Common myeloid progenitor, CD34-positive (primary cell): ENCODE measurements at regions of chr1 and their contacts with region 1.

Region 1: GRCh38 chr1:941588-942383 is 17.3 kb downstream of the NOC2L start:
- DNase-seq: peak in 2 of 3 donors; percentile 51 to 64
- H3K4me3 ChIP-seq: peak overlapping the region in 5 of 7 experiments; percentile 13 to 61 (median 26)
- H3K27ac ChIP-seq: no peak overlapping the region
- H3K4me1 ChIP-seq: peaks cover 0 to 40% (median 33%) of the 10 kb centered on the region in 4 experiments
- H3K27me3 ChIP-seq: peaks cover 0 to 67% (median 18%) of the 10 kb centered on the region in 5 experiments

Region 2: GRCh38 chr1:904310-904950 is 37.4 kb before region 1 on chr1:
- CTCF ChIA-PET with region 1: interaction called, 47 read pairs
- POLR2A ChIA-PET with region 1: no interaction called
- DNase-seq: peak; percentile 72 to 87 (median 87)
- H3K4me3 ChIP-seq: peak overlapping the region in 2 of 7 experiments; percentile 23 to 40
- H3K27ac ChIP-seq: no peak overlapping the region
- H3K4me1 ChIP-seq: peaks cover 5 to 36% (median 25%) of the 10 kb centered on the region in 4 experiments
- H3K27me3 ChIP-seq: peaks cover 0 to 50% (median 10%) of the 10 kb centered on the region in 5 experiments

Region 3: DNA sequence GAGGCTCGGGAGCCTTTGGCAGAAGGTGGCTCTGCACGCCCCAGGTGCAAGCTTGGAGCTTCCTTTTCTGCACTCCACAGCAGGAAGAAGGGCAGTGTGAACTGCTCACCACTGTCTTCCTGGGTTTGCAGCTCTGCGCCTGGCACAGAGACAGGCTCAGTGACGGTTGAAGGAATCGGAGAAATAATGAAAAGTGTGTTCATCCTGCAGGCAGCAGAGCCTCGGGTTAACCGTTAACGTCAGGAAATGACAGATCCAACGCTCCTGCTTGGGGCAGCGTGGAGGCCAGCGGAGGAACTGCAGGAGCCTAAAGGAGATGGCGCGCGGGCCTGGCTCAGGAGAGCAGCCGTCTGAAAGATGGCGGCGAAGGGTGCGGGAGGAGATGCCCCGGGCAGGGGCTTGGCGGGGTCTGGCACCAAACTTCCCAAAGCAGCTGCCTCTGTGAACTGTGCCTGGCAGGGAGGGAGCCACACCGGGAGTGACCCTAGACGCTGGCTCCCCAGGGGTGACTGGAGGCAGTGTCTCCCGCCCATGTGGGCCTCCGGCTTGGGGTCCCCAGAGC is 29.0 kb before region 1 on chr1:
- CTCF ChIA-PET with region 1: interaction called, 11 read pairs
- POLR2A ChIA-PET with region 1: no interaction called
- DNase-seq: peak in 2 of 3 donors; percentile 58 to 64
- H3K4me3 ChIP-seq: peak overlapping the region in 3 of 7 experiments; percentile 0 to 24 (median 20)
- H3K27ac ChIP-seq: no peak overlapping the region
- H3K4me1 ChIP-seq: peaks cover 0 to 73% (median 53%) of the 10 kb centered on the region in 4 experiments
- H3K27me3 ChIP-seq: peaks cover 0 to 2% (median 0%) of the 10 kb centered on the region in 5 experiments

Region 4: DNA sequence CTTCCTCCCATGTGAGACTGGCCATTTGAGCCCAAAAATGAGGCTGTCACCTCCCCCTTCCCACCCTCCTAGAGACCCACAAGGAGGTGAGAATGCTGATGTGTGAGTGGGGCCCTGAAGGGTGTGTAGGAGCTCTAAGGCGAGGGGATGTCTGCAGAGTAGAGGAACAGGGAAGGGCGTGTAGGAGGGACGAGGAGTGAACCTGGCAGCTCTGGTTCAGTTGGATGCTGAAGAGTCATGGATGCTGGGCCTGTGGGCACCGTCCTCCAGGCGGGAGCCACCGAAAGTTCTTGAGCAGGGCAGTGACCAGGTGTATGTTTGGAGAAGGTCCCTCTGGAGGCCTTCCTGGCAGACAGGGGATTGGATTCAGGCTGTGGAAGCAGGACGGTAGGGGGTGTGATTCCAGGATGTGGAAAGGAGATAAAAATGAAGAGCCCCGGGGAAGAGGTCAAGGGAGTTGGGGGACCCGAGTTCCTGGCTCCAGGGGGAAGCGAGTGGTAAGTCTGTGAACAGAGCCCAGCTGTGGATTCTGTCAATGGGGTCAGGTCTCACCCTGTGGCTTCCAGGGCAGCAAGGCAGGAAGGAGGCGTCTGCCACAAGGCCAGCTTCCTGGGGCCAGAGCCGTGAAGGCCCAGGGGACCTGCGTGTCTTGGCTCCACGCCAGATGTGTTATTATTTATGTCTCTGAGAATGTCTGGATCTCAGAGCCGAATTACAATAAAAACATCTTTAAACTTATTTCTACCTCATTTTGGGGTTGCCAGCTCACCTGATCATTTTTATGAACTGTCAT is 10.2 kb before region 1 on chr1:
- CTCF ChIA-PET with region 1: interaction called, 22 read pairs
- POLR2A ChIA-PET with region 1: no interaction called
- DNase-seq: no peak
- H3K4me3 ChIP-seq: no peak overlapping the region
- H3K27ac ChIP-seq: no peak overlapping the region
- H3K4me1 ChIP-seq: peaks cover 0 to 8% (median 6%) of the 10 kb centered on the region in 4 experiments
- H3K27me3 ChIP-seq: peaks cover 0 to 66% (median 10%) of the 10 kb centered on the region in 5 experiments

Region 5: GRCh38 chr1:975896-976683 is 34.3 kb after region 1 on chr1:
- CTCF ChIA-PET with region 1: interaction called, 12 read pairs
- POLR2A ChIA-PET with region 1: no interaction called
- DNase-seq: peak; percentile 61 to 71 (median 65)
- H3K4me3 ChIP-seq: peak overlapping the region in 3 of 7 experiments; percentile 38 to 67 (median 50)
- H3K27ac ChIP-seq: no peak overlapping the region
- H3K4me1 ChIP-seq: peaks cover 0 to 8% (median 7%) of the 10 kb centered on the region in 4 experiments
- H3K27me3 ChIP-seq: peaks cover 0 to 40% (median 8%) of the 10 kb centered on the region in 5 experiments

Region 6: DNA sequence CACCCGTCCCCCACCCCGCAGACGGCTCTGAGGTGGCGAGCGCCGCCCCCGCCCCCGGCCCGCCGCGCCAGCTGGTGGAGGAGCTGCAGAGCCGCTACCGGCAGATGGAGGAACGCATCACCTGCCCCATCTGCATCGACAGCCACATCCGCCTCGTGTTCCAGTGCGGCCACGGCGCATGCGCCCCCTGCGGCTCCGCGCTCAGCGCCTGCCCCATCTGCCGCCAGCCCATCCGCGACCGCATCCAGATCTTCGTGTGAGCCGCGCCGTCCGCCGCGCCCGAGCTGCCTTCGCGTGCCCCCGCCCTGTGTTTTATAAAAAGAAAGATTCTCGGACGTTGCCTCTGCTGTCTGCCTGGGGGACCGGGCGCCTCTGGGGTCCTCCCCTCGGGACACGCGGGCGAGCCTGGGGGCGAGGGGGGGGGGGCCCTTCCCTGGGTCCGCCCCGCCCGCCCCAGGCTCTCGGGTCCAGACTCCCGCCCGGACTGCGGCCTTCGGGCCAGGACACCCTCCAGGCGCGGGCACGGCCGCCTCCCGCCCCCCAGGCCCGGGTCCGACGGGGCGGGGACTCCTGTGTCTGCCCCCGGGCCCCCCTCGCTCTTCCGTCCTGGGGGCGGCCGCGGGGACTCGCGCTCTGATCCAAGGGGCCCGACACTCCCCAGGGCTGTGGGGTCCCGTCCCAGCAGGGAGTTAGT is 688.6 kb after region 1 on chr1:
- CTCF ChIA-PET with region 1: no interaction called
- POLR2A ChIA-PET with region 1: no interaction called
- DNase-seq: peak; percentile 93 to 98 (median 98)
- H3K4me3 ChIP-seq: peak overlapping the region in 3 of 7 experiments; percentile 31 to 40 (median 38)
- H3K27ac ChIP-seq: no peak overlapping the region
- H3K4me1 ChIP-seq: peaks cover 0 to 31% (median 13%) of the 10 kb centered on the region in 4 experiments
- H3K27me3 ChIP-seq: peaks cover 0 to 18% (median 0%) of the 10 kb centered on the region in 5 experiments